ENCODE measurements at regions of chr14 and their contacts with region 1.

Region 1: GRCh38 chr14:69593018-69593677 is 18.2 kb upstream of the SUSD6 start:
- DNase-seq: no peak
- H3K4me3 ChIP-seq: no peak overlapping the region
- H3K27ac ChIP-seq: no peak overlapping the region
- H3K4me1 ChIP-seq: no peaks in the 10 kb centered on the region
- H3K27me3 ChIP-seq: peaks cover 0 to 4% of the 10 kb centered on the region in 2 experiments
- CTCF ChIP-seq: no peak
- POLR2A ChIP-seq: no peak

Region 2: DNA sequence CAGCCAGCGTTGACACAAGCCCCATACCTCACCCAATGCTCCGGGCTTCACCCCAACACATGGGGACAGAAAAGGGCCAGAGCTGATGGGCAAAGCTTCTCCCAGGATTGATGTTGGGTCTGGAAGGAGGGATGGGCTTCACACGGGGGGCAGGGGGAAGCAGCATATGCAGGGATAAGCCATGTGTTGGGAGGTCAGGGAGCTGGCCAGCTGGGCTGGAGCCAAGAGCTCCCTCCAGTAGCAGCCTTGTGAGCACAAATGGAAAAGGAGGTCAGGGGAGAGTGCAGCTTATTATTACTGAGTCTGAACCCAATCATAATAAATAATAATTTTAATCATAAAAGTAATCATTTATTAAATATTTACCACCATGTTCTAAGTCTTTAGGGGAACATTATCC is 99.4 kb before region 1 on chr14:
- CTCF ChIA-PET with region 1: no interaction called
- POLR2A ChIA-PET with region 1: no interaction called
- dilution Hi-C with region 1: no loop called
- intact Hi-C with region 1: no loop called
- DNase-seq: no peak
- H3K4me3 ChIP-seq: no peak overlapping the region
- H3K27ac ChIP-seq: no peak overlapping the region
- H3K4me1 ChIP-seq: no peaks in the 10 kb centered on the region
- H3K27me3 ChIP-seq: peaks cover 0 to 5% of the 10 kb centered on the region in 2 experiments
- CTCF ChIP-seq: no peak
- POLR2A ChIP-seq: no peak

Region 3: GRCh38 chr14:69580009-69580577 is 13.1 kb before region 1 on chr14:
- CTCF ChIA-PET with region 1: interaction called, 135 read pairs
- POLR2A ChIA-PET with region 1: no interaction called
- dilution Hi-C with region 1: no loop called
- intact Hi-C with region 1: no loop called
- DNase-seq: peak; percentile 36
- H3K4me3 ChIP-seq: no peak overlapping the region
- H3K27ac ChIP-seq: no peak overlapping the region
- H3K4me1 ChIP-seq: no peaks in the 10 kb centered on the region
- H3K27me3 ChIP-seq: peaks cover 15 to 27% of the 10 kb centered on the region in 2 experiments
- CTCF ChIP-seq: peak; percentile 44 to 62
- POLR2A ChIP-seq: no peak